ENCODE measurements at regions of chr1 and their contacts with region 1.

Region 1: GRCh38 chr1:19651141-19651737 is 7.1 kb downstream of the NBL1 start:
- DNase-seq: peak in 7 of 10 donors; percentile 6 to 93 (median 60)

Region 2: DNA sequence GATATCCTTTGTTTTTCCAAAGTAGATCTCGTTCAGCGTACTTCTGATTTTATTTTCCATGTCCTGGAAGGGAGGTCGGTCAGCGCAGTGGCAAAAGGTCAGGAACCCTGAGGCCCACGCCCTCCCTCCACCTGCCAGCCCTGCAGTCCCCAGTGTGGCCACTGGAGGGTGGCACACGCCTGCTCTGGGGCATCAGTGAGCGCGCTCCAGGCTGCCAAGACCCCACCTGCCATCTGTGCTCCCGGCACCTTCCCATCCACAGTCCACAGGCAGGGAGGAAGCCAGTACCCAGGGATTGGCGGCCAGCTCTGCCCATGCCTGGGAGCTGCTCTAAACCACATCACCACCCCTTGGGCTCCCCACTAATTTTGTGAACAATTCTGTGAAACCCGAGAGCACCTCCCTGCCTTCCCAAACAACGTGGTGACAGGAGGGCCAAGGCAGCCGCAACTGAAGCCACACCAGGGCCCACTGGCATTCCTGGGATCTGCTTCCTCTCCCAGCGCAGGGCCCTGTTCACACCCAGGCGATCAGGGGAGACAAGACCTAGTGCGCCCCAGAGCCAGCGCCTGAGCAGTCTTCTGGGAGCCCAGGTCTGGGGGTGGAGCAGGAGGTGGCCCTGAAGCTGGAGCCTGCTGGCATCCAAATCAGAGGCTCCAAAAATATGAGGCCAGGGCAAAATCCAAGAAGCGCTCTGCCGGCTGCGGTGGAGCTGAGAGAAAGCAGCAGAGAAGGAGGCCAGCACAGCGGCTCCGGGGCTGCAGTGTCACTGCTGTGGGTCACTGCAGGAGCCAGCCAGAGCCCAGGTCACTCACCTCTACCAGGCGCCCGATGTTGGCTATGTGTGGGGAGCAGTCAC is 306.6 kb before region 1 on chr1:
- intact Hi-C with region 1: loop called (anchors 2 kb)
- DNase-seq: peak in 9 of 10 donors; percentile 49 to 95 (median 70)

Region 3: DNA sequence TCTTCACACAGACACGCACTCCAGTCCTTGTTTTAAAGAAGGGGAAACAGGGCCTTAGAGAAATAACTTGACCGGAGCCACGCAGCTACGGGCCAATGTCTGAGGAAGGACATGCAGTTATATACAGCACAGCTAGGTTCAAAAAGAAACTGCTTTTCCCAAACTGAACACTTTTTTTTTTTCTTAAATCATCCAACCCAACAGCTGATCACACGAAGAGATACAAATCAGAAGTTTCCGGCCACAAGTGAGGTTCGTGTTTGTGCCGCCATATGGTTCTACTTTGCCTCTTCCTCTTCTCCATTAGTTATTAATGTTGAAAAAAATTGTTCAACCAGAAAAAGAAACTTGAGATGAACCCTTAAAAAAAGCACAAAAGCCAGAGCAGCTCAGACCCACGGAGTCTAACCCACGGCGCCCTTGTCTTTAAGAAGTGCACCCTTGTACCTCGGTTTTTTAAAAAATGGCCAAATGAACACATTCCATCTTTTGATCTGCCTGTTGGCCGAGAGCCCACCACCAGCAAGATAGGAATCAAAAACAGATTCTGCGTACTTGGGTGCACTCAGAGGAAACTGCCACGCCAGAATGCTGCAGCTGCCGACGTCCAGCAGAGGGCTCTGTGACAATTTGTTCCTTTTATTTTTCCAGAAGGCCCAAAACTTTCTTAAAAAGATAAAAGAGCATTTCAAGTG is 260.2 kb before region 1 on chr1:
- intact Hi-C with region 1: loop called (anchors 2 kb)
- DNase-seq: peak in 7 of 10 donors; percentile 34 to 90 (median 50)